Activated naive CD4-positive, alpha-beta T cell treated with anti-CD3 and anti-CD28 coated beads, Interleukin-2, amount 10 ng/mL, durations not matched to agents 7 days and 5 days (primary cell): ENCODE measurements at regions of chr12 and their contacts with region 1.

Region 1: DNA sequence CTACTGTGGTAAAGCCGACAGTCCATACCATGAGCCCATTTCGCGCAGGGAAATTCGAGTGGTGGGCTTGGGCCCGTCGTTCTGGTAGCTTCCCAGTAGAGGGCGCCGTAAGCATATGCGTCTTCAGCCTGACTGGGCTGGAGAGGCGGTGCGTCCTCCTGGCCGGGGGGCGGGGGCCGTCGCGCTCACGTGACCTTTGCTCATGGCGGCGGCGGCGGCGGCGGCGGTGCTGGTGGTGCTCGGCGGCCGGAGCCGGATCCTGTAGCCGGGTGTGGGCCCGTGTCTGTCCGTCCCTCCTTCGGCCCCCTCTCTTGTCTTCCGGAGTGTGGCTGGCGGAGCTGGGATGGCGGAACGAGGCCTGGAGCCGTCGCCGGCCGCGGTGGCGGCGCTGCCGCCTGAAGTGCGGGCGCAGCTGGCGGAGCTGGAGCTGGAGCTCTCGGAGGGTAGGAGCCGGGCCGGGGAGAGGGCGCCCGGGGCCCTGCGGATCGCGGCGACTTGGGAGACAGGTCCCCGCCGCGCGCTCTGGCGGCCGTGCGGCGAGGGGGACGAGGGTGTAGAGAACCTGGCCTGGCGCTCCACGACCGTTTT is at the start of gene DIP2B:
- DNase-seq: peak; percentile 97
- H3K4me3 Mint-ChIP-seq: peak within 1 kb of the TSS; percentile 99
- H3K27ac Mint-ChIP-seq: peak within 1 kb of the TSS; percentile 95
- H3K4me1 Mint-ChIP-seq: peaks cover 44% of the 10 kb centered on the region
- H3K27me3 Mint-ChIP-seq: no peaks in the 10 kb centered on the region

Region 2: DNA sequence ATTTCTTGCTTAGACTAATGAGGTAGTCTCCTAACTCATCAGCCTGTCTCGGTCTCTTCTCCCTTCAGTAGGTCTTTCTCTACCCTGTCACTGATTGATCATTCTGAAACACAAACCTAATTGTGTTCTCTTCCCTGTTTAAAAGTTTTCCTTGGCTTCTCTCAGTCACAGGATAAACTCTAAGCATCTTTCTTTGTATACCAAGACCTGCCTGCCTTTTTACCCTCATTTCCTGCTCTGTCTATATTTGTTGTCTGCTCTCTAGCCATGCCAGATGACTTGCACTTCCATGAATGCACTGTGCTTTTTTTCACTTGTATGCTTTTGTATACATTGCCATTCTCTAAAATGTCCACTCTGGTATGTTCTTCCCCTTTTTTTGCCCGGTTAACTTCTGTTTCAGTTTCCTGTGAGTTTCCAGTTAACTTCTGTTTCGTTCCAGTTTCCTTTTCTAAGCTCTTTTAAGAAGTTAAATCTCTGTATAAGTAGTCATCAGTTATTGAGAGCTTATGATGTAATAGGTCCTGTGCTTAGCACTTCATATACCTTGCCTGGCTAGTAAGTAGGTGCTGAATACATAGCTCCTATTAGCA is 12.7 kb after region 1 on chr12:
- CTCF ChIA-PET with region 1: interaction called, 14 read pairs
- DNase-seq: no peak
- H3K4me3 Mint-ChIP-seq: no peak overlapping the region
- H3K27ac Mint-ChIP-seq: no peak overlapping the region
- H3K4me1 Mint-ChIP-seq: peaks cover 43% of the 10 kb centered on the region
- H3K27me3 Mint-ChIP-seq: no peaks in the 10 kb centered on the region

Region 3: GRCh38 chr12:50637870-50638481 is 133.1 kb after region 1 on chr12:
- CTCF ChIA-PET with region 1: interaction called, 115 read pairs
- DNase-seq: no peak
- H3K4me3 Mint-ChIP-seq: no peak overlapping the region
- H3K27ac Mint-ChIP-seq: no peak overlapping the region
- H3K4me1 Mint-ChIP-seq: peaks cover 52% of the 10 kb centered on the region
- H3K27me3 Mint-ChIP-seq: no peaks in the 10 kb centered on the region